ENCODE measurements at regions of chr4 and their contacts with region 1.

Region 1: DNA sequence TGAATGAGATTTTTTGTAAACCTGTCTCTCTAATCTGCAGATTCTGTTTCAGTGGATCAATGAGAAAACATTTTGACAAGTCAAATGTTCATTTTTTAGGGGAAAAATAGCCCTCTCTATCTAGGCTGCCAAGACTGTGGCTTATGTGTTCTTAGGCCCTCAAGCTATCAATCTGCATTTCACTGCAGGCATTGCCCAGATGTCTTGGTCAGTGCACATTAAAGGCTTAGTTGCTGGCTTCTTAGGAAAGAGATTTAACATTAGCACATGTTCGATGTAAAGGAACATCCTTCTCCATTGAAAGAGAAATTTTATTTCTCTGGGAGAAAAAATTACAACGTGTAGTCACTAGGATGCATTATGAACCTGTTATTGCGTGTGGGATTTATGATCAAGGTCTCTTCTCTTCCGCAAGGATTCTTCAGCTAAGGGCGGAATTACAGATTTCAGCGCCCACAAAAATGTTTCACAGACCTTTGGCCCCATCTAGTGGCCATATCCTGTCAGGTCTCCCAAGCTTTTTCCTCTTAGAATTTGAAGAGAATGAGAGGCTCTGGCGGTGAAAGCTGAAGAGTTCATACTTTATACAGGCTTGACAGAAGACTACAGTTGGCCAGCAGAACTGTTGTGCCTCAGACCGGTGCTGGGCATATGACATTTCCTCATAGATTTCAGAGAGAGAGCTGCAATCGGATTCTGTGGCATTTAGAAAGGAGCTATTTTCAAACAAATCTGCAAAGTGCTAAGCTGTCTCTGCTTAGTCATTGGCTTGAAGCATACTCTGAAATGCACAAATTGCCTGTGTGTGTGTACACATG is 144.6 kb upstream of the NOCT start:
- DNase-seq: peak; percentile 55 to 77 (median 64)
- H3K4me3 ChIP-seq: no peak overlapping the region
- H3K27ac ChIP-seq: no peak overlapping the region
- H3K4me1 ChIP-seq: no peaks in the 10 kb centered on the region
- H3K27me3 ChIP-seq: peaks cover 0 to 6% (median 0%) of the 10 kb centered on the region in 5 experiments

Region 2: GRCh38 chr4:138035781-138036258 is 835.1 kb before region 1 on chr4:
- CTCF ChIA-PET with region 1: interaction called, 24 read pairs
- POLR2A ChIA-PET with region 1: no interaction called
- DNase-seq: peak; percentile 25 to 51 (median 48)
- H3K4me3 ChIP-seq: no peak overlapping the region
- H3K27ac ChIP-seq: no peak overlapping the region
- H3K4me1 ChIP-seq: peaks cover 0 to 2% (median 0%) of the 10 kb centered on the region in 4 experiments
- H3K27me3 ChIP-seq: no peaks in the 10 kb centered on the region

Region 3: DNA sequence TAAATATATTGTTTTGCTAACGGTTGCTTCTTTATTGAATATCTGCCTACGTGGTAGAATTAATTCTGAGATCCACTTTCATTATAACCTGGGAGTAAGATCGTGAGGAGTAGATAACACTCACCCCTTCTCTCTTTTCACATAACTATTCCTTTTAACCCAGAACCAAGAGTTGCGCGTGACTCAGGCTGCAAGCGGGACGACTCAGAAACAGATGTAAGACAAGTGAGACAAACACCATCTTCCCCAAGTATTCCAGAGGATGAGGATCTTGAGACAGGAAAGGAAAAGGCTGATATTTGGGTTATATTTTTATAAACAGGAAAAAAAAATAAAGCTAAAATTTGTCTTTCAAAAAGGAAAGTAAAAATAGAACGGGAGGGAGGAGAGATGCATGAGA is 174.2 kb before region 1 on chr4:
- CTCF ChIA-PET with region 1: no interaction called
- POLR2A ChIA-PET with region 1: no interaction called
- DNase-seq: no peak
- H3K4me3 ChIP-seq: no peak overlapping the region
- H3K27ac ChIP-seq: no peak overlapping the region
- H3K4me1 ChIP-seq: peaks cover 0 to 17% (median 3%) of the 10 kb centered on the region in 4 experiments
- H3K27me3 ChIP-seq: peaks cover 0 to 2% (median 0%) of the 10 kb centered on the region in 5 experiments

Region 4: DNA sequence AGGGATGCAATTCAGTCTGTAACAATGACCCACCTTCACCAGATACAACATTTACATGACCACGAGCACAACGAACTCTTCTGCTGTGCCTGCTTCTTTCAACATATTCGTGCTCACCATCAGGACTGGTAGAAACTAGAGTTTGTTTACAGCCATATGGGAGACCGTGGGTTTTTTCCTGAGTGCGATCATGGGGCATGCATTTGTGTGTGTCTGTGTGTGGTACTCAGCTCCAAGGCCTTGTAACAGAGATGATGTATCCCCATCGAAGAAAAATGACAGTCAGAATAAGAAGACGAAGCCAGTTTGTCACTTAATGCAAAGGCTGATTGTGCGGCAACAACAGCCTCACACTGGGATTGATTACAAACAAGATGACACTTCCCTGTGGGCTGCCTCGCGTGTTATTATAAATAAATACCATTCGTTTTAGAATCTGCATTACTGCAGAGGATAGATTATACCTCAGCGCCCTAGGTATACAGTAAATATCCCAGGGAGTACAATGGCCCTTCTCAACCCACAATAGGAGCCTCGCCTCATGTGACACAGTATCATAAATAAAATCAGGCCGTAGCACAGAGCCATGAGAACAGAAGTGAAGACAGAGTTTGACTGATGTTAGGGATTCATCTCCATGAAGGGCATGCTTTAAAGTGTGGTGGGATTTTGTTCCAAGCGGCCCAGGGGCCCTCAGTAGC is 47.4 kb after region 1 on chr4:
- CTCF ChIA-PET with region 1: interaction called, 13 read pairs
- POLR2A ChIA-PET with region 1: no interaction called
- DNase-seq: no peak
- H3K4me3 ChIP-seq: no peak overlapping the region
- H3K27ac ChIP-seq: no peak overlapping the region
- H3K4me1 ChIP-seq: no peaks in the 10 kb centered on the region
- H3K27me3 ChIP-seq: peaks cover 0 to 4% (median 0%) of the 10 kb centered on the region in 5 experiments

Region 5: GRCh38 chr4:139167774-139168444 is 297.0 kb after region 1 on chr4:
- CTCF ChIA-PET with region 1: no interaction called
- POLR2A ChIA-PET with region 1: no interaction called
- DNase-seq: peak; percentile 57 to 73 (median 71)
- H3K4me3 ChIP-seq: no peak overlapping the region
- H3K27ac ChIP-seq: peak overlapping the region in 1 of 2 experiments; percentile 53
- H3K4me1 ChIP-seq: peaks cover 0 to 32% (median 18%) of the 10 kb centered on the region in 4 experiments
- H3K27me3 ChIP-seq: no peaks in the 10 kb centered on the region